Psoas muscle (tissue), 8 donors: ENCODE measurements at regions of chr19 and their contacts with region 1.

Region 1: DNA sequence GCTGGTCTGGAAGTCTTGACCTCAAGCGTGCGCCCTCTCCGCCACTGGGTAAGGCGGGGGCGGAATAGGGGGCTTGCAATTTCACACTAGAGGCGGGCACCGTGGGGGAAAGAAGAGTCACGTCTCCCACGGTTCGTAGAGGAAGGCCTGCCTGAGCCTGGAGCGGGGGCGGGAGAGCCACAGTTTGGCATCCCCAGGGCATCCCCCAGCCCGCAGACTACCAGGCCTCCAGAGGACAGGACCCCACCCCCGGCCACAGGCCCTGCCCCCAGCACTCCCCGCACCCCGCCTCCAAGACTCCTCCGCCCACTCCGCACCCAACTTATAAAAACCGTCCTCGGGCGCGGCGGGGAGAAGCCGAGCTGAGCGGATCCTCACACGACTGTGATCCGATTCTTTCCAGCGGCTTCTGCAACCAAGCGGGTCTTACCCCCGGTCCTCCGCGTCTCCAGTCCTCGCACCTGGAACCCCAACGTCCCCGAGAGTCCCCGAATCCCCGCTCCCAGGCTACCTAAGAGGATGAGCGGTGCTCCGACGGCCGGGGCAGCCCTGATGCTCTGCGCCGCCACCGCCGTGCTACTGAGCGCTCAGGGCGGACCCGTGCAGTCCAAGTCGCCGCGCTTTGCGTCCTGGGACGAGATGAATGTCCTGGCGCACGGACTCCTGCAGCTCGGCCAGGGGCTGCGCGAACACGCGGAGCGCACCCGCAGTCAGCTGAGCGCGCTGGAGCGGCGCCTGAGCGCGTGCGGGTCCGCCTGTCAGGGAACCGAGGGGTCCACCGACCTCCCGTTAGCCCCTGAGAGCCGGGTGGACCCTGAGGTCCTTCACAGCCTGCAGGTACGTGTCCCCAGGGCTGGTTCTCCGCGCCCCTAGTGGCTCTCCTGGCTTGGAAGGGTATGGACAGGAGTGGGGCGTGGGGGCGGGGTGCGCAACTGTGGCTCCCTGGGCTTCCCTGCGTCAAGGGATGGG is at the start of gene ANGPTL4:
- DNase-seq: peak; percentile 87 to 89
- ATAC-seq: peak; percentile 50 to 61 (median 58)
- H3K4me3 ChIP-seq: peak within 1 kb of the TSS; percentile 84
- H3K27ac ChIP-seq: peak within 1 kb of the TSS; percentile 93
- H3K4me1 ChIP-seq: peaks cover 56% of the 10 kb centered on the region
- H3K27me3 ChIP-seq: no peaks in the 10 kb centered on the region
- CTCF ChIP-seq: peak; percentile 3
- total RNA-seq, gene ANGPTL4: 10.7 to 118 (median 44.7) TPM

Region 2: DNA sequence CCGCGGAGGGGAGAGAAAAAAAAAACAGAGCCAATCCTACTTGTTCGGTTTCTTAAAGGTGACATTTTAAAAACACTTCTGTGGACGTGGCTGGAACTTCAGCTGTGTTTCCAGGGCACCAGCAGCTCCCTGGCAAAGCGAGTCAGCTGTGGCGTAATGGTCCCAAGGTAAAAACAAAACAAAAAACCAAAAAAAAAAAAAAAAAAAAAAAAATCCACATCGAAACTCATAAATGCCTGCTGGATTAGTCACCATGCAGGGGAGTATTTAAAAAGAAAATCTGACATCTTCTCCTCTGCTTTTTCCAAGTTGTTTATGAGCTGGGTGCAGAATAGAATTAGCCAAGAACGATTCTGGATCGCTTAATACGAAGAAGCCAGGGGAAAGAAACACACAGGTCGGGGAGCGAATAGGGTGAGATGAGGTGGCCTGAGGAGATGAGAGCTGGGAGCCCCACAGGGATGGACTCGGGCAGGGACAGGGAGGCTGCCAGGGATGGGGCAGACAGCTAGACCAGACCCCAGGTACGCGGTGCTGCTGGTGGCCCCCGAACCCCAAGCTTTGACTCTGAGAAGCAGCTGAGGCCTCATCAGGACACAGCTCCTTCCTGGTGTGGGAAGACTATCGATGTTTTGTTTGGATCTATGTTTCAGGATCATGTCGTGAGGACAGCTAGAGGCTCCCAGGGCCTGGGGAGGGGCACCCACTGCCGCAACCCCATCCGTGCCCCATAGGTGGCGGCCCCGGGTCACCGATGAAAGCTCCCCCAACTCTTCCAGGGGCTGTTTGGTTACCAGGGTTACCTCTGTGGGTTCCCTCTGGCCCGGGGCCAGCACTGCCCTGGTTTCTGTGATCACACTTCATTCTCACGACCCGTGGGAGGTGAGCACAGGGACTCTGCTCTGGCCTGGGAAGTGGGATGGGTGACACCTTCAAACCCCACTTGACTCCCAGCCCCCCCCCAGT is 435.1 kb before region 1 on chr19:
- intact Hi-C with region 1: no loop called
- DNase-seq: peak; percentile 64 to 74
- ATAC-seq: peak in 1 of 4 donors; percentile 26
- H3K4me3 ChIP-seq: no peak overlapping the region
- H3K27ac ChIP-seq: peak overlapping the region; percentile 68
- H3K4me1 ChIP-seq: peaks cover 23% of the 10 kb centered on the region
- H3K27me3 ChIP-seq: no peaks in the 10 kb centered on the region
- CTCF ChIP-seq: peak; percentile 17

Region 3: GRCh38 chr19:8321060-8321985 is 42.8 kb before region 1 on chr19 and contains the starts of genes NDUFA7 and RPS28:
- intact Hi-C with region 1: no loop called
- DNase-seq: peak; percentile 96 to 99
- ATAC-seq: peak; percentile 95 to 98 (median 97)
- H3K4me3 ChIP-seq: peak within 1 kb of the TSS; percentile 99
- H3K27ac ChIP-seq: peak within 1 kb of the TSS; percentile 97
- H3K4me1 ChIP-seq: peaks cover 33% of the 10 kb centered on the region
- H3K27me3 ChIP-seq: no peaks in the 10 kb centered on the region
- CTCF ChIP-seq: peak; percentile 28
- total RNA-seq, gene NDUFA7: 76.8 to 150 (median 109) TPM
- total RNA-seq, gene RPS28: 947 to 1,442 (median 1,003) TPM

Region 4: DNA sequence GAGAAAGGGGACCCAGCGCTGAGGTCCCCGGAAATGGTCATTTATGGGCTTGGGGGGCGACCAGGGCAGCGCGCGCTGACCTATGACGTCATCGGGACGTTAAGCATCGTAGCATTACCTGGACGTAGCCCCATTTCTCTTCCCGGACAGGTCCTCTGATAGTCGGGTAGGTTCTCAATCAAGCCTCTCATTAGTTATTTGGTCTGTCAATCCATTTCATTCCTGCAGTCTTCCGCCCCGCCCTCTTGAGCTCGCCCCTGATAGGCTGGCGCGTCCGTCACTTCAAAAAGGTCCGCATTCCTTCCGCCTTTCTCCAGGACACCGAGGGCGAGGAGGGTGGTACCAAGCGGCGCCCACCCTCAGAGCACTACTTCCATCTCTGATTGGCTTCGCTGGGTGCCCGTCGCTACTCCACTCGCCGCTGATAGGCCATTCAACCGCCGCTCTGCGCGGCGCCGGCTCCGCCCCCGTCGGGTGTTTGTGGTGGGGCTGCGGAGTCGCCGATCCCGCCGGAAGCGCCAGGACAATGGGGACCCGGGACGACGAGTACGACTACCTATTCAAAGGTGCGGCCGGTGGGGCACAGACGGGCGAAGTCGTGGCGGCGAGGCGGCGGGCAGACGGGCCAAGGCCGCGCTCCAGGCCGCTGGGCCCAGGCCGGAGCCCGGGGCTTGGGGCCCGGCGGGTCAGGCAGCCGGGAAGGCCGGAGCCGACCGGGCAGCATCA is 26.0 kb after region 1 on chr19 and contains the start of gene RAB11B:
- intact Hi-C with region 1: loop called (anchors 2 kb)
- DNase-seq: peak; percentile 99 to 100
- ATAC-seq: peak; percentile 80 to 86 (median 86)
- H3K4me3 ChIP-seq: peak within 1 kb of the TSS; percentile 91
- H3K27ac ChIP-seq: peak within 1 kb of the TSS; percentile 100
- H3K4me1 ChIP-seq: peaks cover 45% of the 10 kb centered on the region
- H3K27me3 ChIP-seq: no peaks in the 10 kb centered on the region
- CTCF ChIP-seq: no peak
- total RNA-seq, gene RAB11B: 77.1 to 130 (median 82.2) TPM

Region 5: DNA sequence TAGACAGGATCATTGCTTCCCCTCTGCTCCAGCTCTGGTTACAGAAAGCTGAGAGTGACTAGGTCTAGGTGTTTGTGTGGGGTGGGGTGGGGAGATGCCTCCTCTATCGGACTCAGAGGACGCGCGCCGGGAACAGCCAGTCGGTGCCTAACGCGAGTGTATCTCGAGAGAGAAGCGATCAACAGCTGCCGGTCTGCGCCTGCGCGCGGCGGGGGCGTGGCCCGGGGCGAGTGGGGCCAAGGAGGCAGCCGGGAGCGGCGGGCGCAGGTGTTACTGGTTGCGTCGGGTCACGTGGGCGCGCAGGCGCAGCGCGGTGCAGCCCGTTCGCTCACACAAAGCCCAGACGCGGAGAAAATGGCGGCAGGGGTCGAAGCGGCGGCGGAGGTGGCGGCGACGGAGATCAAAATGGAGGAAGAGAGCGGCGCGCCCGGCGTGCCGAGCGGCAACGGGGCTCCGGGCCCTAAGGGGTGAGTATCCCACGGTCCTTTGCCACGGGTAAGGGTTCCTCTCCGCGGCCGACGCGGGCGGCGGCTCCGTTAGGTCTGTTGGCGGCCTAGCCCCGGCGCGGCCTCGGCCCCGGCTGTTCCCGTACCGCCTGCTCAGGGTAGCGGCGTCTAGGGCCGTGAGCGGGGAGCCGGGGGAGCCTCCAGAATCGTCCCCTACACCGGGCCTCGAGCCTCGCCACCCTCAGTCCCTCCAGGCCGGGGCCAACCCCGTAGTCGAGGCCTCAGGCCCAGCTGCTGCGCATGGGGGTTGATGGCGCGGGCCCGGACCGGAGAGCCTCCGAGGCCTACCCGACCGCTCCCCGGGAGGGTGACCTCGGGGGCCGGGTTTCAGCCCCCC is 80.8 kb after region 1 on chr19 and contains the start of gene HNRNPM:
- intact Hi-C with region 1: loop called in 1 of 2 experiments (anchors 5 kb)
- DNase-seq: peak; percentile 100
- ATAC-seq: peak; percentile 97 to 99 (median 98)
- H3K4me3 ChIP-seq: peak within 1 kb of the TSS; percentile 100
- H3K27ac ChIP-seq: peak within 1 kb of the TSS; percentile 99
- H3K4me1 ChIP-seq: peaks cover 37% of the 10 kb centered on the region
- H3K27me3 ChIP-seq: no peaks in the 10 kb centered on the region
- CTCF ChIP-seq: no peak
- total RNA-seq, gene HNRNPM: 73.2 to 92.2 (median 84.1) TPM